Activated CD4-positive, alpha-beta memory T cell treated with anti-CD3 and anti-CD28 coated beads for 36 hours (primary cell): ENCODE measurements at regions of chr15 and their contacts with region 1.

Region 1: GRCh38 chr15:40217159-40217824 is 21.6 kb upstream of the PAK6 start:
- DNase-seq: peak; percentile 40
- H3K4me3 Mint-ChIP-seq: no peak overlapping the region
- H3K27ac Mint-ChIP-seq: no peak overlapping the region
- H3K4me1 Mint-ChIP-seq: no peaks in the 10 kb centered on the region
- H3K27me3 Mint-ChIP-seq: no peaks in the 10 kb centered on the region

Region 2: DNA sequence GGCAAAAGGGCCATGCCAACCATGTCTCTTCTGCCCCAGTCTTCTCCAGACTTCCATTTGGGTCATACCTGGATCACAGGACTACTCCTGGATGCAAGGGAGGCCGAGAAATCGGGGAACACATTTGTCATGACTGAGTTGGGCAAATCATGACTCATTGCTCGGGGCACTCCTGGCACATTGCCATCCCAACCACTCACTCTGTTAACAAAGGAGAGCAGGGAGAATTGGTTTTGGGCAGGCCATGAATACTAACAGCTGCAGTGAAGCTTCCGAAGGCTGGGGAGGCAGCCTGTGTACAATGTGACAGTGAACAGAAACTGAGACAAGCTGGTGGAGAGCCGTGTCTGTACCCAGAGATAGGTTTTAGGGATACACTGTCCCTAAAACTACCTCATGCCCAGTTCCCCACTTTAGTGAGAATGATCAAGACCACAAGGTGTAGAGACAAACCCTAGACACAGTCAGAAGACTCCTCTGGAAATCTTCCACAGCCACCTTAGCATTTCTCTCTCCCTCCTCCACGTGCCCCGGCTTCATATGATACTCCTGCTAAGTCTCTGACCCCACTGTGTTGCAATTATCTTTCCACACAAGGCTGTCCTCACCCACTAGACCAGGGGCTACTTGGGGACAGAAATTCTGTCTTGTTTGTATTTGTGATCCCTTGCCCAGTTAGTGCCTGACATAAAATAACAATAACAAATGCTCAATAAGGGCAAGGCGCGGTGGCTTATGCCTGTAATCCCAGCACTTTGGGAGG is 66.9 kb before region 1 on chr15:
- CTCF ChIA-PET with region 1: no interaction called
- POLR2A ChIA-PET with region 1: no interaction called
- intact Hi-C with region 1: no loop called
- DNase-seq: no peak
- H3K4me3 Mint-ChIP-seq: no peak overlapping the region
- H3K27ac Mint-ChIP-seq: no peak overlapping the region
- H3K4me1 Mint-ChIP-seq: no peaks in the 10 kb centered on the region
- H3K27me3 Mint-ChIP-seq: no peaks in the 10 kb centered on the region

Region 3: GRCh38 chr15:40197434-40197833 is 19.9 kb before region 1 on chr15:
- CTCF ChIA-PET with region 1: interaction called, 13 read pairs
- POLR2A ChIA-PET with region 1: interaction called, 3 read pairs
- intact Hi-C with region 1: no loop called
- DNase-seq: no peak
- H3K4me3 Mint-ChIP-seq: no peak overlapping the region
- H3K27ac Mint-ChIP-seq: peak overlapping the region; percentile 14
- H3K4me1 Mint-ChIP-seq: peaks cover 26% of the 10 kb centered on the region
- H3K27me3 Mint-ChIP-seq: no peaks in the 10 kb centered on the region